ENCODE measurements at regions of chr1 and their contacts with region 1.

Region 1: GRCh38 chr1:51506537-51506936 is 12.5 kb downstream of the EPS15 start:
- DNase-seq: peak; percentile 35
- H3K4me3 Mint-ChIP-seq: no peak overlapping the region
- H3K27ac Mint-ChIP-seq: peak overlapping the region; percentile 53
- H3K4me1 Mint-ChIP-seq: peaks cover 61% of the 10 kb centered on the region
- H3K27me3 Mint-ChIP-seq: no peaks in the 10 kb centered on the region

Region 2: DNA sequence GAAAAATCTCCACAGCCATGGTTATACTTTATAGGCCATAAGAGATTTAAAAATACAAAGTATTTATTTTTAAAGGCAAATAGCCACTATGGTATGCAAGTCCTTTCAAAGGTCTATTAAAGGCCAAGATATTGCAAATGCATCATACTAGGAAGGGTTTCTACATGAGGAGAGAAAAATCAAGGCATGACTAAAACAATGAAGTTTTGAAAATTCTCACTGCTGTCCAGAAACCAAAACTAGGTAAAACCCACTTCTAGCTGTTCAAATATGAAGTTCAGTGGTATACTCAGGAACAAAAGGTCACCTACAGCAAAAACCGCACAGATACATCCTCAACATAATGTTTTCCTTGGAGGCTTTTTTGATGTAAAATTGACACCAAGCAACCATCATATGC is 62.4 kb before region 1 on chr1:
- CTCF ChIA-PET with region 1: no interaction called
- POLR2A ChIA-PET with region 1: interaction called, 5 read pairs
- intact Hi-C with region 1: loop called (anchors 1 kb)
- DNase-seq: no peak
- H3K4me3 Mint-ChIP-seq: no peak overlapping the region
- H3K27ac Mint-ChIP-seq: peak overlapping the region; percentile 62
- H3K4me1 Mint-ChIP-seq: peaks cover 36% of the 10 kb centered on the region
- H3K27me3 Mint-ChIP-seq: no peaks in the 10 kb centered on the region

Region 3: DNA sequence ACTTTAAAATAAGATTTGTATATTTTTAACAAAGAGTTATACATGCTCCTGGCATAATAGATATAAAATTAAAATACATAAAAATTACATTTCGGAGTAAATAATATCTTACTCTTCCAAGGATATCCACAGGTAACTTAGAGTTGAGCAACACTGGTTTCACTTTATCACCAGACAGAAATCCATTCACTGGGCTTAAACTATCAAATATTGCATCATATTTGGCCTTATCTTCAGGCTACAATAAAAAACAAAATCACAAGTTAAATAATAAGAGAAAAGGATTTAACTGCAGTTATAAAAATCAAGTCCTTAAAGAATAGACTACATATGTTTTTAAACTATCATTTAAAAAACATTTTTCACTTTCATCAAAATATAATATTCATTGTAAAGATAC is 43.0 kb before region 1 on chr1:
- CTCF ChIA-PET with region 1: no interaction called
- POLR2A ChIA-PET with region 1: no interaction called
- intact Hi-C with region 1: no loop called
- DNase-seq: no peak
- H3K4me3 Mint-ChIP-seq: no peak overlapping the region
- H3K27ac Mint-ChIP-seq: no peak overlapping the region
- H3K4me1 Mint-ChIP-seq: peaks cover 5% of the 10 kb centered on the region
- H3K27me3 Mint-ChIP-seq: no peaks in the 10 kb centered on the region

Region 4: DNA sequence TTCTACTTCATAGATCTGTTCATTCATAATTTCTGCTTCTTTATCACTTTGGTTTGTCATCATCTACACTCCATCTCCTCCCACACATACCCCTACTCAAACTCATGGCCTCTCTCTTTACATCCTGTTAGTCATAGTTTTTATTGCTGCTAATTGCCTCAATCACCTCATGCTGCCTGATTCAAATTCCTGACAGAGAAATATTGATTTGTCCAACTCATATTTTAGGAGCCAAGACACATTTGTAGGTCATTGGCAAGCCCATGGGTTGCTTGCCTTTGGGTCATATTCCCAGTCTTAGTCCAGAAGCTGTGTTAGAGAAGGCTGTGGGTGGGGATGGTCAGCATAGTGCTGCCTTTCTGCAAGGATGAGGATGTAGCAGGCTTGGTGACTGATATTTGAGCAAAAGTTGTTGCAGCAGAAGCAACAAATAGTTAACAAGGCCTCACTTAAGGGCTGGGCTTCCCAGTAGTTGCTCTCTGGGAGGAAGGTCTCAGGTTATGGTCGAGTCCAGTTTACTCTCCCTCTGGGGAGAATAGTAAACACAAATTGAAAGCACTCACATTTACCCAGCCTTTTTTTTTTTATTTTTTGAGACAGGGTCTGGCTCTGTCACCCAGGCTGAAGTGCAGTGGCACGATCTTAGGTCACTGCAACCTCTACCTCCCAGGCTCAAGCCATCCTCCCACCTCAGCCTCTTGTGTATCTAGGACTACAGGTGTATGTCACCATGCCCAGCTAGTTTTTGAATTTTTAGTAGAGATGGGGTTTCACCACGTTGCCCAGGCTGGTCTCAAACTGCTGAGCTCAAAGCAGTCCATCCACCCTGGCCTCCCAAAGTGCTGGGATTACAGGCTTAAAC is 35.0 kb after region 1 on chr1:
- CTCF ChIA-PET with region 1: no interaction called
- POLR2A ChIA-PET with region 1: no interaction called
- intact Hi-C with region 1: loop called (anchors 1 kb)
- DNase-seq: no peak
- H3K4me3 Mint-ChIP-seq: no peak overlapping the region
- H3K27ac Mint-ChIP-seq: peak overlapping the region; percentile 9
- H3K4me1 Mint-ChIP-seq: peaks cover 28% of the 10 kb centered on the region
- H3K27me3 Mint-ChIP-seq: no peaks in the 10 kb centered on the region

Region 5: DNA sequence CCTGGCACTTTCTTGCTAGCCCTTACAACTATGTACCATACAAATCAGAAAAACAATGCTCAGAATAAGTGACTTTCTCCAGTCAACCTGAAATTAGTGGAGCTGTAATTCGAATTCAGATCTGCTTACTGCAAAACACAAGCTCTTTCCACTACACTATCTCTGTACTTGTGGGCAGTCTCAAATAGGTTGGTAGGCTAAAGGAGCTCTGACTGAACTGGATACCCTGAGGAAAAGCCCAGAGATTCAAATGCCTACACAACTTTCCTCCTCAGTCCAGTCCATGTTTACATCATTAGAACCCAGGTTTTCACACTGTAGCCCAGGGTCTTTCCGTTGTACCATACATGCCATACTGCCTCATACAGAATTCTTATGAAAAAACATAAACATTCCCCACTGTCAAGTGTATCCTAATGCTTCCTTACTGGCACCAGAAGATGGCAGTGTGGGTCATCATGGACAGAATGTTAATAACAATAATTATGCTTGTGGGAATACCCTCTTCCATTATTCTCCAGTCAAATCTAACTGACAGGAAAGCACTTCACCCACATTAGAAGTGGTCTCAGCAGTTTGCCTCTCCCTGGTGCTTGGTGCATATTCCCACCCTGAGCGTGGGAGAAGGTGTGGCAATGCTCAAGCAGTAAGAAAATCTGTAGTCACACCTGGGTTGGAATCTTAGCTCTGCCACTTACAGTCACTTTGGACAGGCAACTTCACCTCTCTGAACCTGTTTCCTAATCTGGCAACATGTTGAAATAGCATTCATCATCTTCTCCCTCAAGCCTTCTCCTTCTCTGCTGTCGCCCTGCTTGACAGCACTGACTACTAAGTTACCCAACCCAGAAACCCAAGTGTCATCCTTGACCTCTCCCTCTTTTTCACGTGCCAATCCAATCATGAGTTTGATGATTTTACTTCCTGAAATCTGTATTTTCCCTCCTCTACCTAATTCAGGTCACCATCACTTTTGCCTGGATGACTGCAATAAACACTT is 620.9 kb after region 1 on chr1:
- CTCF ChIA-PET with region 1: no interaction called
- POLR2A ChIA-PET with region 1: no interaction called
- intact Hi-C with region 1: no loop called
- DNase-seq: peak; percentile 20
- H3K4me3 Mint-ChIP-seq: no peak overlapping the region
- H3K27ac Mint-ChIP-seq: no peak overlapping the region
- H3K4me1 Mint-ChIP-seq: peaks cover 4% of the 10 kb centered on the region
- H3K27me3 Mint-ChIP-seq: peaks cover 7% of the 10 kb centered on the region

Measured in activated CD4-positive, alpha-beta memory T cell treated with anti-CD3 and anti-CD28 coated beads for 36 hours (primary cell).